Astrocyte of the cerebellum (primary cell): ENCODE measurements at regions of chr15 and their contacts with region 1.

Region 1: GRCh38 chr15:89317186-89317720 is 17.4 kb downstream of the POLG start:
- DNase-seq: no peak
- H3K4me3 ChIP-seq: no peak overlapping the region
- CTCF ChIP-seq: no peak

Region 2: DNA sequence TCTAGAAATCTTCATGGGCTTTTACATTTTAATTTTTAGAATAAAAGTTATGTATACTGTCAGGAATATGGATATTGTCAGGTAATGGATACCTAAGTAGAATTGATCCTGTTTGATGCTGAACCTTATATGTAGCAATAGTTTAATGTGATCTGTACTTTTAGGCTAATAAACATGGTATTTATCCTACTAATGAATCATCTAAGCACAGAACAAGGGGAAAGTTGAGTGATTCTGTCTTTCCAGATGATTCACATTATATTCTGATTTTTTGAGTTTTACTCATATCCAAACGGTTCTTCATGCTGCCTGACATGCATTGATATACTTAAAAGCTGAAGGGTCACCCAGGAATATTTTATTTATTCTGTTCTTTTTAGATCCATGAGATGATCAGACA is 38.9 kb before region 1 on chr15:
- in situ Hi-C with region 1: loop called (anchors 5 kb)
- DNase-seq: no peak
- H3K4me3 ChIP-seq: no peak overlapping the region
- CTCF ChIP-seq: no peak